Mammary epithelial cell (primary cell): ENCODE measurements at regions of chr2 and their contacts with region 1.

Region 1: DNA sequence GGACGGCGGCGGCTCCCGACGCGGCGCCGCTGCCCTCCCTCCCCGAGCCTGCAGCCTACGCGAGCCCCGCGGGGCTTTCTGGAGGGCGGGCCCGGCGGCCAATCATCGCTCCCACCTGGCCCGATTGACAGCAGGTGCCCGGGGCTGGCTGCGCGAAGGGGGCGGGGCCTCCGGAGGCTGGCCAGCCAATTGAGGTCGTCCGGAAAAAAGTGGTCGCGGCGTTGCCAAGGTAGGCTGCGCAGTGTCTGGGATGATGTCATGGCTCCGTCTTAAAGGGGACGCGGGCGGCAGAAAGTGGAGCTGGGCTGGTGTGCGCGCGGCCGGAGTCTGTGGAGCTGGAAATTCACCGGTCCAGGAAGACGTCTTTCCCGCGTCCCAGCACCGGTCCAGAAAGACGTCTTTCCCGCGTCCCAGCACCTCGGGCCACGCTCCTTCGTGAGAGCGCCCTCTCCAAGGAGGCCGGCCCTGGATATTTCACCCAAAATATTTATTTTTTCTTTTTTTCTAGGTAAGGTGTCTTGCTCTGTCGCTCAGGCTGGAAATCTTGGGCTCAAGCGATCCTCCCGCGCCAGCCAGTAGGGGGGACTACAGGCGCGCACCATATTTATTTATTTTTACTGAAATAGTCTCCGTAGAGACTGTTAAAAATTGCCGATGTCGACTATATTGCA is at the start of gene ACTR1B:
- DNase-seq: peak; percentile 98
- H3K4me3 ChIP-seq: peak within 1 kb of the TSS; percentile 70 to 99 (median 75)
- H3K27ac ChIP-seq: peak within 1 kb of the TSS; percentile 89
- H3K4me1 ChIP-seq: peaks cover 15% of the 10 kb centered on the region
- H3K27me3 ChIP-seq: no peaks in the 10 kb centered on the region
- CTCF ChIP-seq: peak; percentile 42 to 63
- total RNA-seq, gene ACTR1B: 51.8 to 56.4 TPM

Region 2: GRCh38 chr2:96065381-96065930 is 1598.6 kb before region 1 on chr2:
- CTCF ChIA-PET with region 1: interaction called, 3 read pairs
- dilution Hi-C with region 1: no loop called
- in situ Hi-C with region 1: loop called (anchors 25 kb)
- intact Hi-C with region 1: no loop called
- DNase-seq: no peak
- H3K4me3 ChIP-seq: no peak overlapping the region
- H3K27ac ChIP-seq: no peak overlapping the region
- H3K4me1 ChIP-seq: peaks cover 11% of the 10 kb centered on the region
- H3K27me3 ChIP-seq: no peaks in the 10 kb centered on the region
- CTCF ChIP-seq: no peak

Region 3: DNA sequence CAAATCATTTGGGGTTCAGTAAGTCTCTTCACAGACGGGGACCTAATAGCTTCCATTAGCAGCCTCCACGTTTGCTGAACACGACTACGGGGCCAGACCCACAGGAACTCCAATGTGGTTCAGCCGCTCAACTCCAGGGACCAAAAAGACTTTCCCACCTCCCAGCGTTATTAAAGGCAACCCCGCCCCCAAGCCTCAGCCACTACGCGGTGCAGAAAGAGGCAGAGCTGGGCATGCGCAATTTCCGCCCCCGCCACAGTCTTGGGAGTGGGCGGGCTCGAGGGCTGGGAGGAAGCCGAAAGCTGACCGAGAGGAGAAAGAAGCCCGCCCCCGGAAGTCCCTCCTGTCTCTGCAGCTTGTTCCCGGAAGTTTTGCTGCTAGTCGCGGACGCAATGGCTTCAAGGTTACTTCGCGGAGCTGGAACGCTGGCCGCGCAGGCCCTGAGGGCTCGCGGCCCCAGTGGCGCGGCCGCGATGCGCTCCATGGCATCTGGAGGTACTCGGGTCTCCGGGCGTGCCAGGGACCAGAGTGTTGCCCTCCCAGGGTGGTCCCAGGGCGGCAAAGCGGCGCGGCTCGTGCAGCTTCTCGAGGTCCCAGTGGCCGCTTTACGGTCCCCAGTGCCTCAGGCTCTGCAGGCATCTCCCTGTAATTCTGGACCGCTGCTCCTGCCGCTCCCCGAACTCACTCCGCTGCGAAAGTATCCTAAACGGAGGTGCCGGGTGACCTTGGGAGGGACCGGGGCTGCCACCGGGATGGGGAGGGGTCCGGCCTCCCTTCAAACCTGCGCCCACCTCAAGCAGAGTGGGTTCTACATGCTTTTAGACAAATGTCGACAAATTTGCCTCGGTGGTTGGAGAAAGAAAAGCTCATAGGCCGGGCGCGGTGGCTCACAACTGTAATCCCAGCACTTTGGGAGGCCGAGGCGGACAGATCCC is 18.1 kb before region 1 on chr2 and contains the start of gene COX5B:
- CTCF ChIA-PET with region 1: interaction called, 6 read pairs
- dilution Hi-C with region 1: no loop called
- in situ Hi-C with region 1: no loop called
- intact Hi-C with region 1: loop called (anchors 1 kb)
- DNase-seq: peak; percentile 95
- H3K4me3 ChIP-seq: peak within 1 kb of the TSS; percentile 93 to 96 (median 95)
- H3K27ac ChIP-seq: peak within 1 kb of the TSS; percentile 74
- H3K4me1 ChIP-seq: peaks cover 7% of the 10 kb centered on the region
- H3K27me3 ChIP-seq: no peaks in the 10 kb centered on the region
- CTCF ChIP-seq: no peak
- total RNA-seq, gene COX5B: 120 to 181 TPM